Caco-2 (cell line): ENCODE measurements at regions of chr3 and their contacts with region 1.

Region 1: GRCh38 chr3:121989943-121990342 is 32.1 kb downstream of the ILDR1 start:
- DNase-seq: peak; percentile 66 to 82
- H3K4me3 ChIP-seq: no peak overlapping the region
- H3K4me3 Mint-ChIP-seq: no peak overlapping the region
- H3K27ac Mint-ChIP-seq: peak overlapping the region; percentile 36
- H3K4me1 ChIP-seq: peaks cover 22% of the 10 kb centered on the region
- H3K4me1 Mint-ChIP-seq: peaks cover 19% of the 10 kb centered on the region
- H3K27me3 ChIP-seq: no peaks in the 10 kb centered on the region
- H3K27me3 Mint-ChIP-seq: no peaks in the 10 kb centered on the region
- CTCF ChIP-seq: peak in 1 of 2 experiments; percentile 28

Region 2: DNA sequence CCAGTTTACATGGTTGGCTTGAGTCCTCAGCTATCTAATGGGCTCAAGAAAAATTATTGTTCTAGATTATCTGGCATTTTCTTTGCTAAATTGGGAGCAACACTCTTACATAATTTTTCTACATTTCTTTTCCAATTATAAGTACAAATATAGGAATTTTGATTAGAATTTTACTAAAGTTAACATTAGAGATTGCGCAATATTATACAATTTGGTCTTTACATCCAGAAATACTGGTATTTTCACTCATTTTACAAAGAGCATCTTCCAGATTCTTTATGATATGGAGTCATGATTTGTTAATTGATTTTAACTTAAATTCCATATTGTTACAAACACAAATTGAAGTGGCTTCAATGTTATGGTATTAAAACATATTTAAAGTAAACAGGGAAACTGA is 220.7 kb before region 1 on chr3:
- CTCF ChIA-PET with region 1: no interaction called
- POLR2A ChIA-PET with region 1: no interaction called
- intact Hi-C with region 1: no loop called
- DNase-seq: no peak
- H3K4me3 ChIP-seq: no peak overlapping the region
- H3K4me3 Mint-ChIP-seq: no peak overlapping the region
- H3K27ac Mint-ChIP-seq: no peak overlapping the region
- H3K4me1 ChIP-seq: no peaks in the 10 kb centered on the region
- H3K4me1 Mint-ChIP-seq: no peaks in the 10 kb centered on the region
- H3K27me3 ChIP-seq: no peaks in the 10 kb centered on the region
- H3K27me3 Mint-ChIP-seq: no peaks in the 10 kb centered on the region
- CTCF ChIP-seq: no peak

Region 3: GRCh38 chr3:121834696-121835464 is 155.1 kb before region 1 on chr3 and contains the starts of genes EAF2 and IQCB1:
- CTCF ChIA-PET with region 1: no interaction called
- POLR2A ChIA-PET with region 1: no interaction called
- intact Hi-C with region 1: loop called (anchors 1 kb)
- DNase-seq: peak; percentile 95 to 96
- H3K4me3 ChIP-seq: peak within 1 kb of the TSS; percentile 66
- H3K4me3 Mint-ChIP-seq: peak within 1 kb of the TSS; percentile 93
- H3K27ac Mint-ChIP-seq: peak within 1 kb of the TSS; percentile 68
- H3K4me1 ChIP-seq: peaks cover 7% of the 10 kb centered on the region
- H3K4me1 Mint-ChIP-seq: peaks cover 12% of the 10 kb centered on the region
- H3K27me3 ChIP-seq: no peaks in the 10 kb centered on the region
- H3K27me3 Mint-ChIP-seq: peaks cover 3% of the 10 kb centered on the region
- CTCF ChIP-seq: no peak
- total RNA-seq, gene EAF2: 4.5 and 4.6 TPM in 2 replicates
- total RNA-seq, gene IQCB1: 36.1 and 36.4 TPM in 2 replicates

Region 4: GRCh38 chr3:121855555-121855954 is 134.4 kb before region 1 on chr3:
- CTCF ChIA-PET with region 1: no interaction called
- POLR2A ChIA-PET with region 1: no interaction called
- intact Hi-C with region 1: loop called (anchors 1 kb)
- DNase-seq: peak in 1 of 2 experiments; percentile 55
- H3K4me3 ChIP-seq: no peak overlapping the region
- H3K4me3 Mint-ChIP-seq: no peak overlapping the region
- H3K27ac Mint-ChIP-seq: no peak overlapping the region
- H3K4me1 ChIP-seq: no peaks in the 10 kb centered on the region
- H3K4me1 Mint-ChIP-seq: no peaks in the 10 kb centered on the region
- H3K27me3 ChIP-seq: no peaks in the 10 kb centered on the region
- H3K27me3 Mint-ChIP-seq: no peaks in the 10 kb centered on the region
- CTCF ChIP-seq: peak; percentile 34 to 40

Region 5: DNA sequence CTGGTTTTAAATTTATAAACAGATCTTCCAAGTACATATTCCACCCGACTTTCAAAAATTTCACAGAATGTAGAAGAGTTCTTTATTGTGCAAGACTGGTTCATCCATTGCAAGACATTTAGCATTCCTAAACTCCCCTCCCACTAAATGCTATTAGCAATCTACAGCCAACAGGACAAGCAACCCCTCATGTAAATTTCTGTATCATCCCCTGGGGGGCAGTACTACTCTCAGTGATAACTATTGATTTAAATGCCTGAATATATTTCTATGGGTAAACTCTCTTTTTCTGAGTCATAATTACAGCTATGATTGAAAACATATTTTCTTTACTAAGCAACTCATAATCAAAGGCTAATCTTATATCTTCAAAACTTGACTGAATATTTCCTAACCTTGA is 106.4 kb before region 1 on chr3:
- CTCF ChIA-PET with region 1: no interaction called
- POLR2A ChIA-PET with region 1: no interaction called
- intact Hi-C with region 1: loop called (anchors 1 kb)
- DNase-seq: peak in 1 of 2 experiments; percentile 51
- H3K4me3 ChIP-seq: no peak overlapping the region
- H3K4me3 Mint-ChIP-seq: no peak overlapping the region
- H3K27ac Mint-ChIP-seq: no peak overlapping the region
- H3K4me1 ChIP-seq: peaks cover 11% of the 10 kb centered on the region
- H3K4me1 Mint-ChIP-seq: peaks cover 19% of the 10 kb centered on the region
- H3K27me3 ChIP-seq: no peaks in the 10 kb centered on the region
- H3K27me3 Mint-ChIP-seq: no peaks in the 10 kb centered on the region
- CTCF ChIP-seq: peak in 1 of 2 experiments; percentile 55

Region 6: GRCh38 chr3:121924734-121925133 is 65.2 kb before region 1 on chr3:
- CTCF ChIA-PET with region 1: interaction called, 6 read pairs
- POLR2A ChIA-PET with region 1: no interaction called
- intact Hi-C with region 1: loop called (anchors 1 kb)
- DNase-seq: peak in 1 of 2 experiments; percentile 53
- H3K4me3 ChIP-seq: no peak overlapping the region
- H3K4me3 Mint-ChIP-seq: no peak overlapping the region
- H3K27ac Mint-ChIP-seq: no peak overlapping the region
- H3K4me1 ChIP-seq: peaks cover 20% of the 10 kb centered on the region
- H3K4me1 Mint-ChIP-seq: peaks cover 28% of the 10 kb centered on the region
- H3K27me3 ChIP-seq: no peaks in the 10 kb centered on the region; the same call in none of the 2 replicates
- H3K27me3 Mint-ChIP-seq: peaks cover 15% of the 10 kb centered on the region
- CTCF ChIP-seq: no peak

Region 7: DNA sequence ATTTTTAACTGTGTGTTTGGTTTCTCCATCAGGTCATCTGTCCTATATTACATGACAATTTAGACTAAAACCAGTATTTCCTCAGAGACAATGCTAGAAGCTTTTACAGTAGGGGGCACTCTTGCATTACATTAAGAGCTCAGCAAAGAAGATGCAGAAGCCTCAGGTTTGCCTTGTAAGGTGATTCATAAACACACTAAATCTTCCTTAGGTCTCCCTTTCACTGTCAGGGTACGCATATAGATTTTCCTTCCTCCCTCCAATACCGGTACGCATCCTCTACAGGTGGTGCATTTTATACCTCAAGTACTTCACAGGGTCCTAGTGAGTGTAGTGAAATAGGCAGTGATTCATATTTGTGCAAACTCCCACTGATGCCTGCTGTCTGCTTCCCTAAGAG is 111.7 kb after region 1 on chr3:
- CTCF ChIA-PET with region 1: no interaction called
- POLR2A ChIA-PET with region 1: no interaction called
- intact Hi-C with region 1: loop called (anchors 1 kb)
- DNase-seq: peak in 1 of 2 experiments; percentile 46
- H3K4me3 ChIP-seq: no peak overlapping the region
- H3K4me3 Mint-ChIP-seq: no peak overlapping the region
- H3K27ac Mint-ChIP-seq: no peak overlapping the region
- H3K4me1 ChIP-seq: peaks cover 21% of the 10 kb centered on the region
- H3K4me1 Mint-ChIP-seq: no peaks in the 10 kb centered on the region
- H3K27me3 ChIP-seq: no peaks in the 10 kb centered on the region
- H3K27me3 Mint-ChIP-seq: no peaks in the 10 kb centered on the region
- CTCF ChIP-seq: peak; percentile 16 to 44